Natural killer cell (primary cell): ENCODE measurements at regions of chr4 and their contacts with region 1.

Region 1: GRCh38 chr4:48830706-48831531 is at the start of gene OCIAD1:
- DNase-seq: peak; percentile 86 to 100
- ATAC-seq: peak; percentile 91 to 98 (median 91)
- H3K4me3 ChIP-seq: peak within 1 kb of the TSS; percentile 85
- H3K4me3 Mint-ChIP-seq: peak within 1 kb of the TSS; percentile 100
- H3K27ac ChIP-seq: peak within 1 kb of the TSS; percentile 94
- H3K27ac Mint-ChIP-seq: peak within 1 kb of the TSS; percentile 100
- H3K4me1 ChIP-seq: peaks cover 9% of the 10 kb centered on the region
- H3K4me1 Mint-ChIP-seq: peaks cover 33 to 34% of the 10 kb centered on the region in 2 donors
- H3K27me3 ChIP-seq: no peaks in the 10 kb centered on the region
- H3K27me3 Mint-ChIP-seq: peaks cover 6 to 20% of the 10 kb centered on the region in 2 donors
- CTCF ChIP-seq: no peak
- total RNA-seq, gene OCIAD1: 91.4 to 117 (median 93.7) TPM

Region 2: GRCh38 chr4:47463235-47463956 is 1367.5 kb before region 1 on chr4 and contains the start of gene COMMD8:
- intact Hi-C with region 1: loop called (anchors 5 kb)
- DNase-seq: peak; percentile 96 to 99
- ATAC-seq: peak; percentile 95 to 97 (median 95)
- H3K4me3 ChIP-seq: peak within 1 kb of the TSS; percentile 73
- H3K4me3 Mint-ChIP-seq: peak within 1 kb of the TSS; percentile 63
- H3K27ac ChIP-seq: peak within 1 kb of the TSS; percentile 80
- H3K27ac Mint-ChIP-seq: peak within 1 kb of the TSS; percentile 86 to 92
- H3K4me1 ChIP-seq: peaks cover 9% of the 10 kb centered on the region
- H3K4me1 Mint-ChIP-seq: peaks cover 21 to 40% of the 10 kb centered on the region in 2 donors
- H3K27me3 ChIP-seq: no peaks in the 10 kb centered on the region
- H3K27me3 Mint-ChIP-seq: no peaks in the 10 kb centered on the region
- CTCF ChIP-seq: peak; percentile 22
- total RNA-seq, gene COMMD8: 12.3 to 19.6 (median 13.1) TPM

Region 3: DNA sequence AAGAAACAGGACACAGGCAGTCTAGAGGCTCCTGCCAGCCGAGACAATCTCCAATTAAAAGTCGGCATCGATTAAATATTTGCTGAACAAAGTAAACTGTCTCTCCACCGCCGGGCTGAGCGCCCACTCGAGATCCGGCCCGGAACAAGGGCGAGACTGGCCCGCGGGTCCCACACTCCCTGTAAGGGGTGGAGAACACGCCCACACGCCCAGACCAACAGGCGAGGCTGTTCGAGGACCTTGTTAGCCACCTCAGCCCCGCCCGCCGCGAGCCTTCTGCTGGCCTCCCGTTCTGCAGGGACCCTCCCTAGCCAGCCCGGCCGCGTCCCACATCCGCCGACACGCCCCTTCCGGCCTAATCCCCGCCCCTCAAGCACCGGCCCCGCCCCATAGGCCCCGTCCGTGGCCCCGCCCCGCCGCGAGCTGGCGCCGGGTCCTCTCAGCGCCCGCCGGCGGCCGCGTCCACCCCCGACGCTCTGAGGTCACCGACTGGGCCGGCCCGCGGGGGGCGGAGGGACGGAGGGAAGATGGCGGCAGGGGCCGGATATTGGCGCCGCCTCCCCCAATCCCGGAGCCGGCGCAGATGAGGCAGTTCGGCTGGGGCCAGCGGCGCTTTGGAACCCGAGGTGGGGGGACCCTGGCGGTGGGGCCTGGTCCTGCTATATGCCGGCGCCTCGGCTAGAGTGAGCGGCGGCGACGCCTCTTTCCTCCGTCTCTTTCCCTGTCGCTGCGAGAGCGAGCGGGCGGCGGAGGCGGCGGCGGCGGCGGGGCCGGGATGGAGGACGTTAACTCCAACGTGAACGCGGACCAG is 489.7 kb before region 1 on chr4 and contains the start of gene SLAIN2:
- intact Hi-C with region 1: loop called (anchors 2 kb)
- DNase-seq: peak; percentile 98 to 100
- ATAC-seq: peak; percentile 82 to 93 (median 87)
- H3K4me3 ChIP-seq: peak within 1 kb of the TSS; percentile 98
- H3K4me3 Mint-ChIP-seq: peak within 1 kb of the TSS; percentile 95
- H3K27ac ChIP-seq: peak within 1 kb of the TSS; percentile 98
- H3K27ac Mint-ChIP-seq: peak within 1 kb of the TSS; percentile 93 to 98
- H3K4me1 ChIP-seq: peaks cover 12% of the 10 kb centered on the region
- H3K4me1 Mint-ChIP-seq: peaks cover 45 to 51% of the 10 kb centered on the region in 2 donors
- H3K27me3 ChIP-seq: no peaks in the 10 kb centered on the region
- H3K27me3 Mint-ChIP-seq: no peaks in the 10 kb centered on the region
- CTCF ChIP-seq: peak; percentile 43
- total RNA-seq, gene SLAIN2: 76.9 to 103 (median 98.5) TPM

Region 4: GRCh38 chr4:48578132-48578968 is 252.6 kb before region 1 on chr4:
- intact Hi-C with region 1: loop called (anchors 5 kb)
- DNase-seq: peak in 1 of 2 donors; percentile 82
- ATAC-seq: peak; percentile 81 to 97 (median 93)
- H3K4me3 ChIP-seq: no peak overlapping the region
- H3K4me3 Mint-ChIP-seq: no peak overlapping the region
- H3K27ac ChIP-seq: no peak overlapping the region
- H3K27ac Mint-ChIP-seq: peak overlapping the region; percentile 17 to 49
- H3K4me1 ChIP-seq: no peaks in the 10 kb centered on the region
- H3K4me1 Mint-ChIP-seq: no peaks in the 10 kb centered on the region
- H3K27me3 ChIP-seq: no peaks in the 10 kb centered on the region
- H3K27me3 Mint-ChIP-seq: no peaks in the 10 kb centered on the region
- CTCF ChIP-seq: peak; percentile 91

Region 5: GRCh38 chr4:48698029-48698971 is 132.6 kb before region 1 on chr4:
- intact Hi-C with region 1: loop called (anchors 10 kb)
- DNase-seq: peak in 1 of 2 donors; percentile 17
- ATAC-seq: peak in 1 of 3 donors; percentile 56
- H3K4me3 ChIP-seq: no peak overlapping the region
- H3K4me3 Mint-ChIP-seq: peak overlapping the region; percentile 11
- H3K27ac ChIP-seq: no peak overlapping the region
- H3K27ac Mint-ChIP-seq: peak overlapping the region; percentile 74 to 82
- H3K4me1 ChIP-seq: peaks cover 3% of the 10 kb centered on the region
- H3K4me1 Mint-ChIP-seq: peaks cover 62 to 75% of the 10 kb centered on the region in 2 donors
- H3K27me3 ChIP-seq: no peaks in the 10 kb centered on the region
- H3K27me3 Mint-ChIP-seq: no peaks in the 10 kb centered on the region
- CTCF ChIP-seq: no peak

Region 6: DNA sequence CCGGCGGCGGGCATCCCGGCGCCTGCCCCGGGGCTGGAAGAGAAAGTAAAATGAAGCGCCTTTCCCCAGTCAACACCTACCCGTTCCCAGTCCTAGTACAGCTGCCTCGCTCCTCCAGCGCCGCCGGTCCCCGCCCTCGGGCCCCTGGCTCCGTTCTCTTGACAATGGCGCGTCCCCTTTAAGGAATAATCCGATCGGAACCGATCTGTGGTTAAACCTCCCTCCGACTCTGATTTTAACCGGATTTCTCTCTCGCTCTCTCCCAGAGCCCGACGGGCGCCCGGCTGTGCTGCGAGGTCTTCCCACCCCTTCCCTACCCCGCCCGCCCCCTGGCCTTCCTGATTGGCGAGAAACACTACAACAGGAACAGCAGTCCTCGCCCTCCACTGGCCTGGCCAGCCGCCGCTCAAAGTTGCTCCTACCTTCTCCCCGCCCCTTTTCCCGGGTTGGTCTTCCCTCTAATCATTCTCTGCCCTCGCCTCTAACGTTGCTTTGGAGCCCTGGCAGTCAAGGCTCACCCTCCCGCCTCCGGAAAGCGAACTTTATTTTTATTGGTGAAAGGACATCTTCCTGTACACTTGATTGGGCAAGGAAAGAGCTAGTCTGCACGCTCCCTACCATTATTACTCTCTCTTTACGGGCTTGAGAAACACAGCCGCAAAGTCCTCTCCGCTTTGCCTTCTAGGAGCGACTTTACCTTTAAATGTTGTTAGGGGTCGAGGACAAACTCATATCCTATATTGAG is 50.7 kb before region 1 on chr4 and contains the start of gene FRYL:
- intact Hi-C with region 1: loop called (anchors 1 kb)
- DNase-seq: peak; percentile 88 to 99
- ATAC-seq: peak; percentile 84 to 93 (median 87)
- H3K4me3 ChIP-seq: peak within 1 kb of the TSS; percentile 99
- H3K4me3 Mint-ChIP-seq: peak within 1 kb of the TSS; percentile 97
- H3K27ac ChIP-seq: peak within 1 kb of the TSS; percentile 87
- H3K27ac Mint-ChIP-seq: peak within 1 kb of the TSS; percentile 83 to 85
- H3K4me1 ChIP-seq: peaks cover 10% of the 10 kb centered on the region
- H3K4me1 Mint-ChIP-seq: peaks cover 44 to 56% of the 10 kb centered on the region in 2 donors
- H3K27me3 ChIP-seq: no peaks in the 10 kb centered on the region
- H3K27me3 Mint-ChIP-seq: no peaks in the 10 kb centered on the region
- CTCF ChIP-seq: no peak
- total RNA-seq, gene FRYL: 143 to 181 (median 146) TPM